ENCODE measurements at regions of chr14 and their contacts with region 1.

Region 1: GRCh38 chr14:34671716-34672115 is 41.8 kb upstream of the SNX6 start:
- DNase-seq: no peak
- ATAC-seq: no peak
- H3K4me3 ChIP-seq: no peak overlapping the region
- H3K27ac ChIP-seq: no peak overlapping the region
- H3K4me1 ChIP-seq: no peaks in the 10 kb centered on the region
- H3K27me3 ChIP-seq: no peaks in the 10 kb centered on the region
- CTCF ChIP-seq: no peak
- POLR2A ChIP-seq: no peak

Region 2: DNA sequence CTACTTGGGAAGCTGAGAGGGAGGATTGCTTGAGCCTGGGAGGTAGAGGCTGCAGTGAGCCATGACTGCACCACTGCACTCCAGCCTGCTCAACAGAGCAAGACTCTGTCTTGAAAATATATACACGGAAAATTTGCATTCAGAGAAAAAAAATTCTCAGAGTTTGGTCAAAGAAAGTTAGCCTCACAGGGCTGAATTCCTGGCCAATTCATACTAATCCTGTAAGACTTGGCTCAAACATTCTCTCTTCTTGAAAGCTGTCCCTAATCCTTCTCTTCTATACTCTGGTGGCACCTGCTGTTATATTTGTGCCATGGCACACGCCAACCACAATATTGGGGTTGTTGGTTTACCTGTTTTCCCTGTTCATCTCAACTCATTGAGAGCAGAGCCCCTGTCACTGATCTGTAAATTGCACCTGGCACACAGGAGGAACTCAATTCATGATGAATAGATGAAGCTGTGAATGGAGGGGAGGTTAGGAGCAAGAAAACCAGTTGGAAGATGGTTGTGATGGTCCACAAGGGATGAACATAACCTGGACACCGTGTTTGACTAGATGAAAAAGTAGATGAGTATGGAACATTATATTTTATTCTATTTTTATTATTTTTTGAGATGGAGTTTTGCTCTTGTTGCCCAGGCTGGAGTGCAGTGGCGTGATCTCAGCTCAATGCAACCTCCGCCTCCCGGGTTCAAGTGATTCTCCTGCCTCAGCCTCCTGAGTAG is 172.9 kb before region 1 on chr14:
- intact Hi-C with region 1: no loop called
- DNase-seq: peak; percentile 23 to 44 (median 38)
- ATAC-seq: peak; percentile 65
- H3K4me3 ChIP-seq: no peak overlapping the region
- H3K27ac ChIP-seq: no peak overlapping the region
- H3K4me1 ChIP-seq: no peaks in the 10 kb centered on the region
- H3K27me3 ChIP-seq: no peaks in the 10 kb centered on the region
- CTCF ChIP-seq: peak; percentile 18 to 86 (median 83)
- POLR2A ChIP-seq: no peak

Region 3: DNA sequence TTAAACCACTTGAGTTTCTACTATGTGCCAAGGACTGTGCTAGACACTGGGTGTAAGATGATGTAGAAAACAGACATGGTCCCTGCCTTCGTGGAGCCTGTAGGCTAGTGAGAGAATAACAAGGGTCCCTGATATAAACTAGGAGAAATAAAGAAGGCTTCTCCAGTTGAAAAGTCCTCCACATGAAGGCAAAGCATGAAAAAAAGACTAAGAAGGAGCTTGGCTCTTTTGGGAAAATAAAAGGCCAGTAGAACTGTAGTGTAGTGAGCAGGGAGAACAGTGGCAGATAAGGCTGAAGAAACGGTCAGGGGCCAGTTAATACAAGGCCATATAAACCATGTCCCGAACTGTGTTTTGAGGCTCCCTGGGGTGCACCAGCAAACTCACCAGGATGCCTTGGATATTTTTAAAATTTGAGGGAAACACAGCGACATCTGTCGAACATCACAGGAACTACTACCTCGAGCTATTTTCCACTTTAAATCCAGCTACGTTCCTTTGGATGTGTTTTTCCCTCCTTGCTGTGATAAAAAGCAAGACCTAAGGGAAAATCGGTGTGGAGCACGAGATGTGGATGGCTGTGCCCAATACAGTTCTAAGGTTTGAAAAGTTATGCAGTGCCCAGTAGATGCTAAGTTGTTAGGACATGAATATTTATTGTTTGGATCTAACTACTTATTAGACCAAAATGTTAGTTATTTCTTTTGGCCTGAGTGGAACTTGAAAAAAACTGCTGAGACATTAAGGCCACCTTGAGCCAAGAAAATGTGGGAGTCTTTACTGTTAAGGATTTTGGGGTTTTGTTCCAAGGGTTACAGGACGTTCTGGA is 51.2 kb after region 1 on chr14:
- intact Hi-C with region 1: loop called (anchors 5 kb)
- DNase-seq: peak; percentile 38 to 55 (median 47)
- ATAC-seq: peak; percentile 50
- H3K4me3 ChIP-seq: no peak overlapping the region
- H3K27ac ChIP-seq: no peak overlapping the region
- H3K4me1 ChIP-seq: no peaks in the 10 kb centered on the region
- H3K27me3 ChIP-seq: no peaks in the 10 kb centered on the region
- CTCF ChIP-seq: peak; percentile 66 to 83 (median 79)
- POLR2A ChIP-seq: no peak

Measured in body of pancreas (tissue), 4 donors.